A673 (cell line): ENCODE measurements at regions of chr1 and their contacts with region 1.

Region 1: DNA sequence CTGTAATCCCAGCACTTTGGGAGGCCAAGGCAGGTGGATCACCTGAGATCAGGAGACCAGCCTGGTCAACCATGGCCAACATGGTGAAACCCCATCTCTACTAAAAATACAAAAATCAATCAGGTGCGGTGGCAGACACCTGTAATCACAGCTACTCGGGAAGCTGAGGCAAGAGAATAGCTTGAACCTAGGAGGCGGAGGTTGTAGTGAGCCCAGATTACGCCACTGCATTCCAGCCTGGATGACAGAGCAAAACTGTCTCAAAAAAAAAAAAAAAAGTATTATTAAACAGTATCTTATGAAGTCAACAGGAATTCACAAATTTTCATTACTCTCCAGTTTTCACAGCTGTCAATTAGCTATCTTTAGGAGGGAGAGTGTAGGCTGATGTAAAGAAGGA is 3.8 kb downstream of the ACBD6 start:
- DNase-seq: no peak
- H3K4me3 ChIP-seq: no peak overlapping the region
- H3K27ac ChIP-seq: no peak overlapping the region
- H3K4me1 ChIP-seq: peaks cover 8% of the 10 kb centered on the region
- H3K27me3 ChIP-seq: no peaks in the 10 kb centered on the region
- CTCF ChIP-seq: no peak

Region 2: DNA sequence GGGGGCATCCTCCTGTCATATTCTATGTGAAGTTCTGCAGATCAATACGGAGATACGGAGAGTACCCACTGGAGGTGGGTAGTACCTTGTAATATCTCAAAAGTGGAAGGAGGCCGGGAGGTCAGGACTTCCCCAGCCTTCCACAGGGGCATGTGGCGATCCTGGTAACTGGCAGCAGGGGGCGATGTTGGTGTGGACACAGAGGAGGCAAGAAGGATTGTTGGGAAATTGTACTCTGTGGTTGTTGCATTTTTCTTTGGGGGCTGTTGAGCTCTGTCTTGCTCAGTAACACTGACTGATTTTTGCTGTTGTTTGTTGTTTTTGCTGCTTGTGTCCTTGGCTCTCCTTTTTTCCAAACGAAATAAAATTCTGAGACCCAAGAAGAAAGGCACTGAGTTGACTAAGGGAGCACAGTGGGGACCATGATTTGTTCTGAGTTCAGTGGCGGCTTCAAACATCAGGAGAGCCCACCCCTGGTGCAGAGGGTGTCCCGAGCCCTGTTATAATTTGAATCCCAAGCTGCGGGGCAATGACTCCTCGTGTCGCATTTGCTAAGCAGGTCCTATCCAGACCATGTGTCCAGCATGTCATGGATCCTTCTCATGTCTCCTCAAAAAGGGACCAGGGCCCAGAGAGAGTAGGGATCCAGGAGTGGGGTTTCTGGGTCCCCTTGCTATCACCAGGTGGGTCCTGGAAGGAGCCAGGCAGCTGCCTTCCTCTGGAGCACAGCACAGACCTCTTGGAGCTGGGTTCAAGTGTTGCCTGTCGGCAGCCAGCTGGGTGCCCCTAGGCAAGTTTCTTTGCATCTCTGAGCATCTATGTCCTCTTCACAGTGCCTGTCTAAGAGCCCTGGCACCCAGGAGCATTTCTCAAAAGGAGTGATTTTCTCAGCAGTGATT is 245.7 kb before region 1 on chr1:
- CTCF ChIA-PET with region 1: no interaction called
- POLR2A ChIA-PET with region 1: interaction called, 10 read pairs
- intact Hi-C with region 1: no loop called
- DNase-seq: peak; percentile 80
- H3K4me3 ChIP-seq: no peak overlapping the region
- H3K27ac ChIP-seq: no peak overlapping the region
- H3K4me1 ChIP-seq: no peaks in the 10 kb centered on the region
- H3K27me3 ChIP-seq: no peaks in the 10 kb centered on the region
- CTCF ChIP-seq: peak; percentile 92